Caco-2 (cell line): ENCODE measurements at regions of chr2 and their contacts with region 1.

Region 1: GRCh38 chr2:227471924-227472264 is at the start of gene AGFG1:
- DNase-seq: peak; percentile 80 to 89
- H3K4me3 ChIP-seq: peak within 1 kb of the TSS; percentile 79
- H3K4me3 Mint-ChIP-seq: peak within 1 kb of the TSS; percentile 93
- H3K27ac Mint-ChIP-seq: peak within 1 kb of the TSS; percentile 22
- H3K4me1 ChIP-seq: peaks cover 29% of the 10 kb centered on the region
- H3K4me1 Mint-ChIP-seq: peaks cover 12% of the 10 kb centered on the region
- H3K27me3 ChIP-seq: no peaks in the 10 kb centered on the region
- H3K27me3 Mint-ChIP-seq: no peaks in the 10 kb centered on the region
- CTCF ChIP-seq: peak; percentile 88 to 89
- total RNA-seq, gene AGFG1: 73.1 and 73.2 TPM in 2 replicates

Region 2: GRCh38 chr2:227125506-227125905 is 346.4 kb before region 1 on chr2:
- CTCF ChIA-PET with region 1: no interaction called
- POLR2A ChIA-PET with region 1: no interaction called
- intact Hi-C with region 1: loop called (anchors 5 kb)
- DNase-seq: peak; percentile 25 to 41
- H3K4me3 ChIP-seq: no peak overlapping the region
- H3K4me3 Mint-ChIP-seq: no peak overlapping the region
- H3K27ac Mint-ChIP-seq: peak overlapping the region; percentile 62
- H3K4me1 ChIP-seq: peaks cover 15% of the 10 kb centered on the region
- H3K4me1 Mint-ChIP-seq: peaks cover 29% of the 10 kb centered on the region
- H3K27me3 ChIP-seq: no peaks in the 10 kb centered on the region
- H3K27me3 Mint-ChIP-seq: no peaks in the 10 kb centered on the region
- CTCF ChIP-seq: peak in 1 of 2 experiments; percentile 8

Region 3: DNA sequence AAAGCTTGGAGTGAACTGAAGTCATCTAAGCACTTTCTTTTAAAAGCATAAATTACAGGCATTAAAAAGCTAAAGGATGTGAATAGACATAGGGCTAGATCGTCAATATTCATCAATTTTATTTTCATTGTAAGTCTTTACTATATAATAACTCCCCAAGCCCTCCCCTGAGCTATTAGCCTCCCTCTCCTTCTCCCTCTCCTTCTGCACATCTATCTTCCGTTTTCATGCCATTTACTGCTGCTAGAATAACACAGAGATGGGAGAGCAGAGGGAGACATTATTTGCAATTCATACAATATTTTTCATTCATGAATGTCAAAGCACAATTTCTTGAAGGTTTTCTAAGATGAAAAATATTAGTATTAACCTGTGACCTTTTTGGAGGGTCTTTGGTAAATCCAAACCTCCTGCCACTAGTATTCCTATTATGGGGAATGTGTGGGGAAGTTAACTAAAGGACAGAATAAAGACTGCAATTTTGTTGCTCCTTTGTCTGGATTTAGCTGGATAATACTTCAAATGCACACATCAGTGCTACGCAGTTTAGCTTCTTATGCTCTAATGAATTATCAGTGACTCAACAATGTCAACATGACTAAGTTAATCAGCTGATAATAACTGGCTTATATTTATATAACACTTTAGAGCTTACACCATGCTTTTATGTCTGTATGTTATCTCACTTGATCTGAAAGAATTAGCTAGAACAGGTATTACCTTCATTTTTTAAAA is 175.1 kb before region 1 on chr2:
- CTCF ChIA-PET with region 1: no interaction called
- POLR2A ChIA-PET with region 1: no interaction called
- intact Hi-C with region 1: no loop called
- DNase-seq: no peak
- H3K4me3 ChIP-seq: no peak overlapping the region
- H3K4me3 Mint-ChIP-seq: no peak overlapping the region
- H3K27ac Mint-ChIP-seq: no peak overlapping the region
- H3K4me1 ChIP-seq: peaks cover 10% of the 10 kb centered on the region
- H3K4me1 Mint-ChIP-seq: peaks cover 7% of the 10 kb centered on the region
- H3K27me3 ChIP-seq: no peaks in the 10 kb centered on the region
- H3K27me3 Mint-ChIP-seq: no peaks in the 10 kb centered on the region
- CTCF ChIP-seq: no peak

Region 4: DNA sequence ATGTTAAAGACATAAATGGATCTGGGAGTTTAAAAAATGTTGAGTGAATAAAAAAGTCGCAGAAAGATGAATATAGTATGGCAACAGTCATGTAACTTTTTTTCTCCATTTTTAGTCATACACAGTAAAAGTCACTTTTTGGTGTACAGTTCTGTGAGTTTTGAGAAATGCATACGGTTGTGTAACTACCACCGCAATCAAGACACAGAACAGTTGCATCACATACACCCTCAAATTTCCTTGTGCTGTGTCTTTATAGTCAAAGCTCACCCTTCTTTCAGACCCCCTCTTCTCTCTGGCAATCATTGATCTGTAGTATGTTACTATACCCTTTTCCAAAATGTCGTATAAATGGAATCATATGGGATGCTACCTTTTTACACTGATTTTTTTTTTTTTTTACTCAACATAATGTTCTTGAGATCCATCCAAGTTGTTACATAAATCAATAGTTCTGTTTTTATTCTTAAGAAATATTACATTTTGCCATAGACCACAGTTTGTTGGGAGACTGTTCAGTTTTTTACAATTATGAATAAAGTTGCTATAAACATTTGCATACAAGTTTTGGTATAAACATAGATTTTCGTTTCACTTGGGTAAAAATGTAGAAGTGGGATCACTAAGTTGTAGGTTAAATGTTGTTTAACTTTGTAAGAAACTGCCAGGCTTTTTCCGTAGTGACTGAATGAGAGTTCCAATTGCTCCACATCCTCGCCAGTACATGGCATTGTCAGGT is 35.3 kb before region 1 on chr2:
- CTCF ChIA-PET with region 1: no interaction called
- POLR2A ChIA-PET with region 1: no interaction called
- intact Hi-C with region 1: no loop called
- DNase-seq: no peak
- H3K4me3 ChIP-seq: no peak overlapping the region
- H3K4me3 Mint-ChIP-seq: no peak overlapping the region
- H3K27ac Mint-ChIP-seq: no peak overlapping the region
- H3K4me1 ChIP-seq: no peaks in the 10 kb centered on the region
- H3K4me1 Mint-ChIP-seq: no peaks in the 10 kb centered on the region
- H3K27me3 ChIP-seq: no peaks in the 10 kb centered on the region
- H3K27me3 Mint-ChIP-seq: no peaks in the 10 kb centered on the region
- CTCF ChIP-seq: no peak

Region 5: DNA sequence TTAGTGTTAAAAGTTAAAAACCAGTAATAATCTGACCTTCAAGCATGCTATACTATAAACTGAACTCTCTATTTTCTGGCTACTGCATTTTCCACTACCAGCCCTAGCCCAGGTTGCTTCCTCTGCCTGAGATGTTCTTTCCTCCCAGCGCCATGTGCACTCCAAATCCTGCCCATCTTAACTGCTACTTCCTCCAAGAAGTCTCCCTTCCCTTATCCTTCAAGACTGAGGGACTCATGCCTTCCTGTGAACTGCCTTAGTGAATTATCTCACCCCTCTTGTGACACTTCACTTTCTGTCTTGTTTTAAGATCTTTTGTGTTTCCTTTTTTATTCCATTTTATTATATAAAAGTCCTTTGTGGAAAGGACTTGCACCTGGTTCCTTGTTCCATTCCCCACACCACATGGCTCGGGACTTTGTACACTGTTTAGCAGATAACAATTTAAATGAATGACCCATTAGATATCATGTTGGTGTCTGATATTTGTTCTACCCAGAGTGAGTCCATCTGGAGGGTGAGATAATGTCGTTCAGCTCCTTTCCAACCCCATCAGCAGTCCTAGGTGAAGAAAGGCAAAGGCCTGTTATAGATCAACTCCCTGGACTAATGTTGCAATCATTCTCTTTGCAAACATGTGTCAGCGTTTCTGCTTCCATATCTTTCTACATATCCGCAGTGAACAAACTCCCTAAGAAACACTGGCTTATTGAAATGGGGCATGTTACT is 20.8 kb before region 1 on chr2:
- CTCF ChIA-PET with region 1: no interaction called
- POLR2A ChIA-PET with region 1: no interaction called
- intact Hi-C with region 1: loop called (anchors 1 kb)
- DNase-seq: peak; percentile 44 to 58
- H3K4me3 ChIP-seq: no peak overlapping the region
- H3K4me3 Mint-ChIP-seq: peak overlapping the region; percentile 12
- H3K27ac Mint-ChIP-seq: peak overlapping the region; percentile 84
- H3K4me1 ChIP-seq: peaks cover 48% of the 10 kb centered on the region
- H3K4me1 Mint-ChIP-seq: peaks cover 27% of the 10 kb centered on the region
- H3K27me3 ChIP-seq: no peaks in the 10 kb centered on the region
- H3K27me3 Mint-ChIP-seq: no peaks in the 10 kb centered on the region
- CTCF ChIP-seq: no peak

Region 6: DNA sequence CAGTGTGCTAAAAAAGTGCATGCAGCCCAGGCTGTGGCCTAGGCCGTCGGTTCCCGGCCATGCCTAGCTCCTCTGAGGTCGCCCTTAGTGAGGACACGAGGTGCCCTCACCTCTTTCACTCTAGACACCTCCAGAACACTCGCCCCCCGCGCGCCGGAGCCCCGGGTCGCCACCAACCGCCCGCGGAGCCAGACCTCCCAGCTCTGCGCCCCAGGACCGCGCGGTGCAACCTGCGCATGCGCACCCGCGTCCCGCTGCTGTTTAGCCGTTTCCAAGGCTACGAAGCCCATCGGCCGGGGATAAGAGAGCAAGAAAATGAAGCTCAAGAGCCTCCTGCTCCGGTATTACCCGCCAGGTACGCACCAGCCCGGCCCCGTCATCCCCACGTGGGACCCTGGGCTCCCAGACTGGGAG is 399.5 kb after region 1 on chr2 and contains the start of gene DAW1:
- CTCF ChIA-PET with region 1: no interaction called
- POLR2A ChIA-PET with region 1: no interaction called
- intact Hi-C with region 1: loop called (anchors 5 kb)
- DNase-seq: peak; percentile 73 to 82
- H3K4me3 ChIP-seq: peak within 1 kb of the TSS; percentile 56
- H3K4me3 Mint-ChIP-seq: peak within 1 kb of the TSS; percentile 74
- H3K27ac Mint-ChIP-seq: peak within 1 kb of the TSS; percentile 88
- H3K4me1 ChIP-seq: peaks cover 37% of the 10 kb centered on the region
- H3K4me1 Mint-ChIP-seq: peaks cover 37% of the 10 kb centered on the region
- H3K27me3 ChIP-seq: no peaks in the 10 kb centered on the region
- H3K27me3 Mint-ChIP-seq: no peaks in the 10 kb centered on the region
- CTCF ChIP-seq: no peak
- total RNA-seq, gene DAW1: 5.4 and 6.6 TPM in 2 replicates